ENCODE measurements at regions of chr2 and their contacts with region 1.

Region 1: DNA sequence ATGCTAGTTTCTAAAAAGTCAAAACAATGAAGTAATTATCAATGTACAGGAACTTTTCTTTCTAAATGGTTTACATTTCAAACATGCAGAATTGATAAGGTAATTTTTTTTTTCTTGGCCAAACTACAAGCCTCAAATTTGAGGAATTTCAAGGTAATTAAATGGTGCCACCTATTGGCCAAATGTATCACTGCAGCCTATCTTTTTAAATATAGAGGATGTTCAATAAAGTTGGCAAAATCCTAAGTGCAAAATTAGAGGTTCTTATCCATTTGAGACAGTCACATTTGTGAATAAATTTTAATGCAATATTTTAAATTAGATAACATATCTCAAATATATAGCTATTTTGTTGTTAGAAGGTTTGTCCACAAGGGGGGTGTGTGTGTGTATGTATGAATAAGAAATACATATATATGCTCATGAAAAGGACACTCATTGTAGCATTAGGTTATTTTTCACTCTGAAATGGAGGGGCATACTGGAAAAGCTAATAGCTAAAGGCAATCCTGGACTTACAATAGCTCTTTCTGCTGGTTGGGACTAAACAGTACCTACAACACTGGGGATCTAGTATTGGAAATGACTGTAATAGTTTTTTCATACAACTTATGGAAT is 26.2 kb downstream of the MMADHC start:
- DNase-seq: peak; percentile 31
- H3K4me3 ChIP-seq: no peak overlapping the region
- CTCF ChIP-seq: peak; percentile 58

Region 2: GRCh38 chr2:149020432-149020851 is 541.0 kb before region 1 on chr2:
- in situ Hi-C with region 1: loop called (anchors 10 kb)
- DNase-seq: no peak
- H3K4me3 ChIP-seq: no peak overlapping the region
- CTCF ChIP-seq: no peak

Region 3: GRCh38 chr2:149743842-149744448 is 182.5 kb after region 1 on chr2:
- in situ Hi-C with region 1: no loop called
- DNase-seq: peak; percentile 50
- H3K4me3 ChIP-seq: no peak overlapping the region
- CTCF ChIP-seq: peak; percentile 14

Measured in astrocyte of the cerebellum (primary cell).